ENCODE measurements at regions of chr18 and their contacts with region 1.

Region 1: GRCh38 chr18:62131301-62131909 is 55.5 kb downstream of the PIGN start:
- DNase-seq: peak in 1 of 2 experiments; percentile 61
- H3K4me3 ChIP-seq: no peak overlapping the region
- H3K27ac ChIP-seq: no peak overlapping the region
- H3K4me1 ChIP-seq: no peaks in the 10 kb centered on the region
- H3K27me3 ChIP-seq: peaks cover 0 to 1% (median 0%) of the 10 kb centered on the region in 4 experiments; a peak in 1 of 7 replicates
- CTCF ChIP-seq: peak; percentile 60 to 86 (median 84)
- EP300 ChIP-seq: no peak
- POLR2A ChIP-seq: no peak
- RAD21 ChIP-seq: peak; percentile 97

Region 2: DNA sequence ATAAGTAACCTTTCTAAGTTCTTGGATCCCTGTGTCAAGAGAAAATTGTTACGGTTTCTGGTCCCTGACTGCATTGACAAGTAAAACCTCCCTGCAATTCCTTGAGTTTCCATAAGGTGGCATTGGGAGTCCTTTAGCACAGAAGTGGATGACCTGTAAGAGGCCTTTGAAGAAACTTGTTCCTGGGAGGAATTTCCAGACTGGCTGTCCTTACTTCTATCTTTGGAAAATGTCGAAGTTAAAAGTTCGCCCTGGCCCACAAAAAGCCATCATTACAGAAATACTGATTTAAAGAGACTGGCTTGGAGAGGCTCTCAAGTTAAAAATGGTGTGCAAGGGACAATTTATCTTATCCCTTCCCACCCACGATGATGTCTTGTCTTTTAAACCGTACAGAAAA is 579.8 kb before region 1 on chr18:
- CTCF ChIA-PET with region 1: interaction called, 10 read pairs
- POLR2A ChIA-PET with region 1: no interaction called
- DNase-seq: peak in 1 of 2 experiments; percentile 47
- H3K4me3 ChIP-seq: no peak overlapping the region
- H3K27ac ChIP-seq: no peak overlapping the region
- H3K4me1 ChIP-seq: no peaks in the 10 kb centered on the region
- H3K27me3 ChIP-seq: no peaks in the 10 kb centered on the region
- CTCF ChIP-seq: peak in 2 of 3 experiments; percentile 77 to 79; a peak in 3 of 4 replicates
- EP300 ChIP-seq: no peak
- POLR2A ChIP-seq: no peak
- RAD21 ChIP-seq: peak; percentile 81 to 85

Region 3: GRCh38 chr18:62179213-62179612 is 47.8 kb after region 1 on chr18:
- CTCF ChIA-PET with region 1: no interaction called
- POLR2A ChIA-PET with region 1: no interaction called
- DNase-seq: no peak
- H3K4me3 ChIP-seq: no peak overlapping the region
- H3K27ac ChIP-seq: no peak overlapping the region
- H3K4me1 ChIP-seq: no peaks in the 10 kb centered on the region
- H3K27me3 ChIP-seq: peaks cover 0 to 1% (median 0%) of the 10 kb centered on the region in 4 experiments; a peak in 1 of 7 replicates
- CTCF ChIP-seq: no peak
- EP300 ChIP-seq: no peak
- POLR2A ChIP-seq: no peak
- RAD21 ChIP-seq: no peak